Heart left ventricle (tissue), 16 donors: ENCODE measurements at regions of chrX and their contacts with region 1.

Region 1: DNA sequence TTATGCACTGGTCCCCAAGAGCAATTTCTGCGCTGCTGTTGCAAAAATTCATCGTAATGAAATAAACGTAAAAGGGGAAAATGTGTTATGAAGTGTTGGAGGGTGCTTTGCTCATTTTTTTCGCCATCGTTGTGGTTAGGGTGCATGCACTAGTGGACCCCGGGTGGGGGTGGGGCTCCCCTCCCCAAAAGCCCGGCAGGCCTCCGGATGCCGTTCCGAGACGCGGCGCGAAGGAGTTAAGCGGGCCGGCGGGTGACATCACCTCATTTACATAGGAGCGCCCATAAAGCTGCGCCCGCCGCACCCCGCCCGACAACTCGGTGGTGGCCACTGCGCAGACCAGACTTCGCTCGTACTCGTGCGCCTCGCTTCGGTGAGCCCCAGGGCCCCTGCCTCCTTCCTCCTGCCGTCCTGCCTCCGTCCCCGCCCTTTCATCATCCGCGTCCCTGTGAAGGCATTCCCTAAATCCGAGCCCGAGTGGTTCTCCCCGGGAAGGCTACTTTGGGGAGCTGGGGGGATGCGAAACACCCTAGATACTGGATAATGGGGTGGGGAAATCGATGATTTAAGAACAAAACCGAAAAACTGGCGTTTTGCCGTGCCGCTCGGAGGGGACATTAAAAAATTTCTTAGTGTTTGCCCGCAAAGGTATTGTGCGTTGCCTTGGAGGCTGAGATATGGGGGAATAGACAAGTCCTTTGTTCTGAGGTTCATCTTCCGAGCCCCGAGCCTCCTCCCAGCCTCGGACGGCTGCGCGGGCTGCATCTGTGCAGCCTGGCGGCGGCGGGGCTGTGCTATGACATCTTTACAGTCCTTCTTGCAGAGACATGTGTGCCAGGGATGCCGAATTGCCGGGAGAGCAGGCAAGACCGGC is at the start of gene TMSB4X:
- DNase-seq: peak; percentile 84 to 92 (median 87)
- ATAC-seq: peak; percentile 80 to 88 (median 82)
- H3K4me3 ChIP-seq: peak within 1 kb of the TSS; percentile 61 to 99 (median 84)
- H3K27ac ChIP-seq: peak within 1 kb of the TSS; percentile 90 to 99 (median 95)
- H3K4me1 ChIP-seq: peaks cover 0 to 69% (median 9%) of the 10 kb centered on the region in 12 donors
- H3K27me3 ChIP-seq: peaks cover 0 to 19% (median 0%) of the 10 kb centered on the region in 9 donors
- CTCF ChIP-seq: no peak
- POLR2A ChIP-seq: peak; percentile 60 to 98
- total RNA-seq, gene TMSB4X: 689 to 3,543 (median 935) TPM

Region 2: GRCh38 chrX:12946838-12947544 is 28.0 kb before region 1 on chrX:
- intact Hi-C with region 1: no loop called
- DNase-seq: peak in 4 of 5 donors; percentile 59 to 62 (median 60)
- ATAC-seq: peak in 3 of 4 donors; percentile 75 to 79 (median 78)
- H3K4me3 ChIP-seq: no peak overlapping the region
- H3K27ac ChIP-seq: peak overlapping the region in 8 of 12 donors; percentile 32 to 77 (median 64)
- H3K4me1 ChIP-seq: peaks cover 0 to 55% (median 14%) of the 10 kb centered on the region in 12 donors
- H3K27me3 ChIP-seq: peaks cover 0 to 9% (median 0%) of the 10 kb centered on the region in 9 donors
- CTCF ChIP-seq: peak; percentile 73 to 97 (median 83)
- POLR2A ChIP-seq: no peak

Region 3: DNA sequence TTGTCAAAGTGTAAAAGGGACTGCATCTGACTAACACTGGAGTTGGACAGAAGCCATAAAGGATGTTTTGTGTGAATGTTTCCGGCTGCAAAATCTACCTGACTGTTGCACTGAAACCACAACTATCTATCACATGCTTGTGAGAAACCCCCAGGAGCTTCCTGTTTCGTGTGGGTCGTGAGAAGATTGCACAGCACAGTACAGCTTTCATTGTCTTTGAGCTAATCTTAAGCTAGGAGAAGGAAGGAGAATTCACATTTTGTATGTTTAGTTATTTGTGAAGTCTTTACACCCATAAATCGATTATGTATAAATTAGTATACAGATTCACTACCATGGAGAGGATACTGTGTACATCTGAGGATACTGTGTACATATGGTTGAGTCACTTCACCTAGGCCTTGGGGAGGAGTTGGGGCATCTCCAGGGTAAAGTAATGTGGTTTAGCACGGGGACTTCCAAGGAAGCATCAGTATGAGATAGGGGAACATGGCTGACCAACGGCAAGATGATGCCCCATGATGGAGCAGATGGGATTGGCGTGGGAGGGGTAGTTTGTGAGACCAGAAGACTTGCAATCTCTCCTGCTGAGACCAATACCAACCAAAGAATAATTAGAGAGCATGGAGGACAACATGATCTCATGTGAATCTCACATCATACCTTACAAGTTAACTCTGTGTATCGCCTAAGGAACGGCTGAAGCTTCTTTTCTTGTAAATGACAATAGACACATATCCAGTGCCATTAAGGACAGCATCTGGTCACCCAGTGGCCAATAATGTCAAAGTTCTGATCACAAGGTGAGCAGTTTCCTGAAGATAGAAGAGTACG is 112.5 kb after region 1 on chrX:
- intact Hi-C with region 1: loop called in 4 of 10 experiments (anchors 10 kb)
- DNase-seq: no peak
- ATAC-seq: peak in 1 of 4 donors; percentile 63
- H3K4me3 ChIP-seq: no peak overlapping the region
- H3K27ac ChIP-seq: peak overlapping the region in 2 of 12 donors; percentile 37 to 90
- H3K4me1 ChIP-seq: peaks cover 0 to 91% (median under 1%) of the 10 kb centered on the region in 12 donors
- H3K27me3 ChIP-seq: no peaks in the 10 kb centered on the region
- CTCF ChIP-seq: no peak
- POLR2A ChIP-seq: no peak

Region 4: DNA sequence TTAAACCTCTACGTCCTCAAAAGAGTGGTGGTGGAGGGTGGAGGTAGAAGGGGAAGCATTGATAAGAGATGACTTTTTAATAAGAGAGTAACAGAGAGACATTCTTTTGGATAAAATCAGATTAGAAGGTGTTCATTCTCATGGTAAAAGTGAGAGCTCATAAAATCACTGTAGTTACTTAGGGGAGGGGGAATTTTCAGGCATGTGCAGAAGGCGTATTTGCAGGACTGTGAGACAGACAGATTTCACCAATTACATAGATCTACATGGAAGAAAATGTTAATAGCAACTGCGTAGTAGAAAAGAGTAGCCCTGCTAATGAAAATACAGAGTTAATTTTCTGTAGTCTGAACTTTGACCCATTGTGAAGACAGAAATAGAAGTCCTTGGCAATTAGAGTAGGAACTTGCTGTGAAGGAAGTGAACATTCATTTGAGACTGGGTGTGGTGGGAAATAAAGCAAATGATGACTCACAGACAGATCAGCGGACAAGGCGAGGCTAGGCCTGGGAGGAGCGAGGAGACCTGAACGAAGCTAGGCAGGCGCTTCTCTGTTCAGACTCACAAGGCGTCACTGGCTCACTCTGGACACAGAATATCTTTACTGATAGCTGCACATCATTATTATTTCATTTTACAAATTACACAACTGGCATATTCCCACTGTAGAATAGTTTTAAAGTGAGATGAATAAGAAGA is 126.6 kb after region 1 on chrX:
- intact Hi-C with region 1: loop called in 7 of 10 experiments (anchors 5 to 10 kb)
- DNase-seq: peak; percentile 60 to 81 (median 67)
- ATAC-seq: peak; percentile 89 to 100 (median 98)
- H3K4me3 ChIP-seq: no peak overlapping the region
- H3K27ac ChIP-seq: peak overlapping the region; percentile 49 to 85 (median 68)
- H3K4me1 ChIP-seq: peaks cover 0 to 48% (median 17%) of the 10 kb centered on the region in 12 donors
- H3K27me3 ChIP-seq: peaks cover 0 to 3% (median 0%) of the 10 kb centered on the region in 9 donors
- CTCF ChIP-seq: no peak
- POLR2A ChIP-seq: no peak

Region 5: GRCh38 chrX:13167481-13168231 is 192.6 kb after region 1 on chrX:
- intact Hi-C with region 1: loop called in 7 of 10 experiments (anchors 5 to 10 kb)
- DNase-seq: peak in 2 of 5 donors; percentile 24 to 46
- ATAC-seq: peak; percentile 32 to 92 (median 84)
- H3K4me3 ChIP-seq: peak overlapping the region in 1 of 12 donors; percentile 9
- H3K27ac ChIP-seq: peak overlapping the region; percentile 27 to 83 (median 72)
- H3K4me1 ChIP-seq: peaks cover 0 to 33% (median 13%) of the 10 kb centered on the region in 12 donors
- H3K27me3 ChIP-seq: no peaks in the 10 kb centered on the region
- CTCF ChIP-seq: no peak
- POLR2A ChIP-seq: no peak

Region 6: GRCh38 chrX:13357925-13358324 is 382.9 kb after region 1 on chrX:
- intact Hi-C with region 1: loop called in 1 of 10 experiments (anchors 10 kb)
- DNase-seq: no peak
- ATAC-seq: peak in 3 of 4 donors; percentile 40 to 74 (median 51)
- H3K4me3 ChIP-seq: no peak overlapping the region
- H3K27ac ChIP-seq: peak overlapping the region in 5 of 12 donors; percentile 8 to 45 (median 39)
- H3K4me1 ChIP-seq: peaks cover 0 to 14% (median 5%) of the 10 kb centered on the region in 12 donors
- H3K27me3 ChIP-seq: peaks cover 0 to 8% (median 0%) of the 10 kb centered on the region in 9 donors
- CTCF ChIP-seq: no peak
- POLR2A ChIP-seq: no peak